Posterior vena cava (tissue), 2 donors: ENCODE measurements at regions of chr7 and their contacts with region 1.

Region 1: GRCh38 chr7:155398944-155399343 is 59.0 kb upstream of the EN2 start:
- DNase-seq: peak; percentile 79

Region 2: GRCh38 chr7:155230168-155230593 is 168.8 kb before region 1 on chr7:
- intact Hi-C with region 1: no loop called
- DNase-seq: peak; percentile 54

Region 3: GRCh38 chr7:155412537-155413253 is 13.8 kb after region 1 on chr7:
- intact Hi-C with region 1: no loop called
- DNase-seq: no peak

Region 4: DNA sequence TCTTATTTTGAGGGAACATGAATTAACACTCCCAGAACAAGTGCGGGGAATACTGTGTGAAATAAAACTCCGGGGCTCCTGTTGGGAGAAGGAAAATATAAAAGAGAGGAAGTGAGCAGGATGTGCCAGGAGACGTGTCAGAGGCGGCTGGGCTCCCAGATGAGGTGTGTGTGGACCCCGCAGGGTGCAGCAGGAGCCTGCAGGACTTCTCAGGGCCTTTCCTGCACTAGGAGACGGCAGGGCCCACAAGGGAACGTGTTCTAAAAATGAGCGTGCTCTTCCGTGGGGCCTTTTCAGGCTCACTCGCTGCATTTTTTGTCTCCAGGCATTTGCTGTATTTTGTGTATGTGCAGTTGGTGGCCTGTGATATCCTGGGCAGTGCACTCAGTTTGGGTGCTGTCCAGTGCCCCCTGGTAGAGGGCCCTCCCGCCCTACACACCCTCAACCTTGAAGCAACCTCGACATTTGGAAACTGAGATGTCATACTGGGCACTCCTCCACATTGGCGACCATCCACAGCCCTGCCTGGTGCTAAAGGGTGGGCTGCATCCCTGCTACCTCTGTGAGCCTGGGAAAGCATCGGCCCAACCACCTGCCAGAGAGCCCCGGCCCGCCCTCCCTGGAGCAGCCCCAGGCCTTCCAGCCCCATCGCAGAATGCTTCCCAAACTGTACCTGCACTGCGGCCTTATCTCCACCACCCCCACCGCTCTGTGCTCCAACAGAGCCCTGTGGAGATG is 23.8 kb after region 1 on chr7:
- intact Hi-C with region 1: loop called in 1 of 2 experiments (anchors 1 kb)
- DNase-seq: peak; percentile 73